ENCODE measurements at regions of chr2 and their contacts with region 1.

Region 1: DNA sequence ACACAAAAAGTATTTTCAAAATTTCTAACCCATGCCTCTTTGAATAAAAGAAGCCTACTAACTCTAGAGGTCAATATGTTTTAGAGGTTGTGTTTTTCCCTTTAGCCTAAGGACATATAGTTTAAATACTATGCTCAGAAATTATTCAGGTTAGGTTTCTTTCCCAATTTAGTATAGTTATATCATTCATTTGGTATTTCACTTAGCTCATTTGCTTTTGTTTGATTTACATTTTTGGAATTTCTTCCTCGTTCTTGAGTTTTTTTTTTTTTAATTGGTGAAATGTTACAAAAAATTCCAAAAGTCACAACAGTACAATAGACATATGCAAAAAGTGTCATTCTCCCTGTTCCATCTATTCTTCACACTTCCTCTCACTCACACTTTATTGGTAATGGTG is 371.3 kb upstream of the TNP1 start:
- DNase-seq: no peak
- ATAC-seq: no peak
- H3K4me3 ChIP-seq: no peak overlapping the region
- H3K27ac ChIP-seq: no peak overlapping the region
- H3K4me1 ChIP-seq: peaks cover 13% of the 10 kb centered on the region
- H3K27me3 ChIP-seq: no peaks in the 10 kb centered on the region
- CTCF ChIP-seq: no peak

Region 2: DNA sequence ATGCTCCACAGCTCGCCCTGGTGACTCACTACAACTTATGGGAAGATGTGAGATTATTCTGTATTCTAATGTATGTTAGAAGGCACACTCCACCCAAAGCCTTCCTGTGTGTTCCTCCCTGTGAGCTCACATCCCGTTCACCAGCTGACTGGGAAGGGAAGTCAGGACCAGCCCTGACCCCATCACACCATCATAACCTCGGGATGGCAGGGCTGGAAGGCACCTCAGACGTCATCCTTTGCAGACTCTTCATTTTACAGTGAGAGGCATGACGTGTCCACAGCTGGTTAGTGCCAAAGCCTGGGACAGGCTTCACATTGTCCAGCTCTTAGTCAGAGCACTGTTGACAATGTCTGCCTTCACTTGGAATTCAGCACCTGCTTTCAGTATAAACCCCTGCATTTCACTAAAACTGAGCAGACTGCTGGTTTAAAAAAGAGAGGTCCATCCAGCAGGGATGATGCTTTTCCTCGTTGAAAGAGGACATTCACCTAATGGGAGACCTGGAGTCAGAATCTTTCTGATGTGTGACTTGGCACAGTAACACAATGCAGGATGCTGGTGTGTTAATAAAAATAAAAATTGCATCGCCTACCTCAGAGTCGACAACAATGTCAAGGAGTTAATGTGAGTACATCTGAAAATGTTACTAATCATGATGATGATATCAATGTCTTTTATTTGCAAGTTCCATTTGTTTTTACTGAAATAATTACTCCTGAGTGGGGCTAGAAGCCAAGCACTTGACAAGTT is 46.6 kb after region 1 on chr2:
- CTCF ChIA-PET with region 1: no interaction called
- POLR2A ChIA-PET with region 1: no interaction called
- intact Hi-C with region 1: loop called (anchors 5 kb)
- DNase-seq: peak; percentile 96
- ATAC-seq: peak; percentile 72
- H3K4me3 ChIP-seq: no peak overlapping the region
- H3K27ac ChIP-seq: peak overlapping the region; percentile 94
- H3K4me1 ChIP-seq: peaks cover 50% of the 10 kb centered on the region
- H3K27me3 ChIP-seq: no peaks in the 10 kb centered on the region
- CTCF ChIP-seq: no peak

Region 3: DNA sequence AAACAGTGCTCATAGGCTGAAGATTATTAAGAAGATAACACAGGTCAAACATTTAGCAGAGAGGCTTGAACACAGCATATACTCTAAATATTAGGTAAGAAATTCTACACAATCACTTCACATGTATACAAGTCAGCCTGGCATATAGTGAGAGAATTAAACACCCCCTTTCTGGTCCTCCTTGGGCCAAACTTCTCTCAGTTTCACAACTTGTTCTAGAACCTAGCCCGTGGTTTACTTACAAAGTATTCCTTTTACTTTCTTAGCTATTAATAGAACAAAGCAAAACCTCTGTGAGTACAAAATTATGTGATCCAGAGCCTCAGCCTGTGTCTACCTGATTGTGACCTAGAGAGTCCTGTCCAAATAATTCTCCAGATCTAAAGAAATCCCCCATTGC is 208.8 kb after region 1 on chr2:
- CTCF ChIA-PET with region 1: no interaction called
- POLR2A ChIA-PET with region 1: no interaction called
- intact Hi-C with region 1: loop called (anchors 5 kb)
- DNase-seq: no peak
- ATAC-seq: no peak
- H3K4me3 ChIP-seq: no peak overlapping the region
- H3K27ac ChIP-seq: no peak overlapping the region
- H3K4me1 ChIP-seq: peaks cover 14% of the 10 kb centered on the region
- H3K27me3 ChIP-seq: no peaks in the 10 kb centered on the region
- CTCF ChIP-seq: no peak